ENCODE measurements at regions of chr2 and their contacts with region 1.

Region 1: GRCh38 chr2:207571370-207571769 is 41.6 kb downstream of the CREB1 start:
- DNase-seq: no peak
- H3K4me3 Mint-ChIP-seq: no peak overlapping the region
- H3K27ac Mint-ChIP-seq: peak overlapping the region; percentile 19
- H3K4me1 Mint-ChIP-seq: no peaks in the 10 kb centered on the region
- H3K27me3 Mint-ChIP-seq: no peaks in the 10 kb centered on the region

Region 2: DNA sequence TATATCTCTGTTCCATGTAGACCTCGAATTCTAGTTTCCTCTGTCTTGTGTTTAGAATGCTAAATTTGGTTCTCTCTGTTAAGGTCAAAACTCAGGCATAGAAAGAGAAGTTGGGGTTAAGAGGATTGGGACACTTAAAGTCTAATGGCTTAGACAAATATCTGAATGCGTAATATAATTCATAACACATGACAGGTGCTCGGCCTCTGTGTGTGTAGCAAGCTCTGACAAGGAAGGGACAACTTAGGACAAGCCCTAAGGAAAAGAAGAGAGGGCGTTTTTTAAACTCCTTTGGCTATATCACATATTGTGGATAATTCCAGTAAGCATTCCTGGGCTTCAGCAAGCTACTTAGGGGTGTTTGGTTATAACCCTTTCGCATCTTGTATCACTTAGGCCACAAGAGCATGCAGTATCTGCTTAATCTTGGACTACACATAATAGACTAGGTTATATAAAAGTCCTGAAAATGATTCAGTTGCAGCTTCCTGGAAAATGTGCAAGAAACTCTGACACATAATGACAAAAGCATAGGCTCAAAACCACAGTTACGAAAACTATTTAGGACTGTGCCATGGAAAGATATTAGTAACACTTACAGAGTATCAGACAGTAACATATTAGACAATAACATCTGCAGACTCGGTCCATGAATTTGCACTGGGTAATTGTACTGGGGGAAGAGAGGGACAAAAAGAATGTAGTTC is 57.7 kb before region 1 on chr2:
- CTCF ChIA-PET with region 1: no interaction called
- POLR2A ChIA-PET with region 1: interaction called, 11 read pairs
- DNase-seq: no peak
- H3K4me3 Mint-ChIP-seq: no peak overlapping the region
- H3K27ac Mint-ChIP-seq: no peak overlapping the region
- H3K4me1 Mint-ChIP-seq: peaks cover 12% of the 10 kb centered on the region
- H3K27me3 Mint-ChIP-seq: peaks cover 3% of the 10 kb centered on the region

Measured in activated CD4-positive, alpha-beta T cell treated with anti-CD3 and anti-CD28 coated beads, Interleukin-2, amount 10 ng/mL, durations not matched to agents 7 days and 5 days (primary cell).